Right cardiac atrium (tissue), 5 donors: ENCODE measurements at regions of chr22 and their contacts with region 1.

Region 1: GRCh38 chr22:22397277-22397870 is 111.2 kb downstream of the ZNF280B start:
- DNase-seq: peak in 2 of 3 donors; percentile 51 to 66
- ATAC-seq: peak; percentile 88 to 89
- H3K4me3 ChIP-seq: no peak overlapping the region
- H3K27ac ChIP-seq: peak overlapping the region; percentile 18
- H3K4me1 ChIP-seq: no peaks in the 10 kb centered on the region
- H3K27me3 ChIP-seq: no peaks in the 10 kb centered on the region

Region 2: GRCh38 chr22:22329792-22330191 is 67.6 kb before region 1 on chr22:
- intact Hi-C with region 1: no loop called
- DNase-seq: no peak
- ATAC-seq: no peak
- H3K4me3 ChIP-seq: no peak overlapping the region
- H3K27ac ChIP-seq: no peak overlapping the region
- H3K4me1 ChIP-seq: no peaks in the 10 kb centered on the region
- H3K27me3 ChIP-seq: peaks cover 5% of the 10 kb centered on the region

Region 3: GRCh38 chr22:22348127-22348814 is 49.1 kb before region 1 on chr22:
- intact Hi-C with region 1: loop called in 1 of 4 experiments (anchors 2 kb)
- DNase-seq: no peak
- ATAC-seq: no peak
- H3K4me3 ChIP-seq: no peak overlapping the region
- H3K27ac ChIP-seq: no peak overlapping the region
- H3K4me1 ChIP-seq: no peaks in the 10 kb centered on the region
- H3K27me3 ChIP-seq: no peaks in the 10 kb centered on the region